ENCODE measurements at regions of chr16 and their contacts with region 1.

Region 1: DNA sequence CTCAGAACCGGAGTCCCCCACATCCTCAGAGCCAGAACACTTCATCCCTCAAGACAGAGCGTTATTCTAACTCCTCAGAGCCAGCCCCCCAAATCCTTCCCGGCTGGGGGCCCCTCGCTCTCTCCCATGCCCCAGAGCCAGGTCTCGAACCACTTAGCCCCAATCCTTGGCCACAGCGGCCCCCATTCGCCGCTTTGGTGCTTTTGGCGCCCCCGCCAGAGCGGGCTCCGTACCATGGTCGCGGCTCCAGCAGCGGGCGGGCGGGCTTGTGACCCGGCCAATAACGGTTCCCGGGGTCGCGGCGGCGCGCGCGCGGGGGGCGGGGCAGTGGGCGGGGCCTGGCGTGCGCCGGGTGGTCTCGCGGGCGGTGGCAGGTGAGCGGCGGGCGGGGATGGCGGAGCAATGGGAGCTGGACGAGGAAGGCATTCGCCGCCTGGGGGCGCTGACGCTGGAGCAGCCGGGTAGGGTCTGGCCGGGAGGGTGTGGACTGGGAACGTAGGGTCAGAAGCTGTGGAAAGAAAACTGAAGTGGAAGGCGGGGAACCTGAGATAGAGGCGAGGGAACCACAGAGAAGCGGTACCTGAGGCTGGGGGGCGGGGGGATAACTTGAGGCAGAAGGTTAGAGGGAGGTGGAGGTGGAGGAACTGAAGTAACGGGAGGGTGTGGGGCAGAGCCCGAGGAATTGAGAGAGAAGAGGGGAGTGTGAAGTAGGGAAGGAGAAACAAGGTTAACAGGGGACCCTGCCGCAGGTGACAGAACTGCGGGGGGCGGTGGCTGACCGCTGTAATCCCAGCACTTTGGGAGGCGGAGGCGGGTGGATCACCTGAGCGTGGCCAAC is at the starts of genes KCTD19 and LRRC36:
- DNase-seq: no peak
- H3K4me3 ChIP-seq: peak within 1 kb of the TSS; percentile 48
- H3K27me3 ChIP-seq: peaks cover 9% of the 10 kb centered on the region
- CTCF ChIP-seq: peak; percentile 57
- polyA plus RNA-seq, gene KCTD19: 0.06 TPM in 1 of 2 replicates, not detected in the other
- polyA plus RNA-seq, gene LRRC36: 0.06 TPM in 1 of 2 replicates, not detected in the other

Region 2: DNA sequence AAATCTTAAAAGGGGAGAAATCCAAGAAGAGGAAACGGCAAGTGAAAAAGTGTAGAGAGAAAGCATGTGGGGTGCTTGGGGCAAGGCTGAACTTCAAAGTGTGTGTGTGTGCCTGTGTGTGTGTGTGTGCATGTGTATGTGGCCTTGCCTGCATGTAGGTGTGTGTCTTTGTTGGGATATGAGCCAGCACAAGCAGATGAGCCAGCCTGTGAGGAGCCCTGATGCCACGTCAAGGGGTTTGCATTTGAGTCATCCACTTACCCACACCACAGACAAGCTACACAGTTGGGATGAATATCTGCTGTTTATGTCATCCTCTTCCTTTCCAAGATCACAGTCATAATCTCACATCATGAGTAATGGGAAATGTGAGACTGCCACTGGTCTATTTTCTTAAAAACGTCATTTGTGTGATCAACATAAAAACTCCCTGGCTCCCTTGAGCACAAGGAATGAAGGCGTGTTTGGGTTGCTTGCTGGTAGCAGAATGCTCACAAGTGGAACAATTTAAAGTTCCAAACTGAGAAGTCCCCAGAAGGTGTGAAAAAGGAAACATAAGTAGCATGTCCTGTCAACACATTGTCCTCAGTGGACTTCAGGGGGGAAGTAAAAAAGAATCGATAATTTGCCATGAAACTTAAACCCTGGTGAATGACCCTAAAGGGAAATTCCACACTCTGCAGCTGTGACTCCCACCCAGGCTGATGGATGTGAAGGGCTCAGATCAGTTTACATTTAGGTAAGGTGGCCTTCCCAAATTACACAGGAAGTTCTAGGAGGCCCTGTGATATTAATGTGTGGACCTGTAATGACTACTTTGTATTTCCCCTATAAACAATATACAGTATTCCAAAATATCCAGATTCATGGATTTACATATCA is 14.8 kb before region 1 on chr16:
- CTCF ChIA-PET with region 1: interaction called, 10 read pairs
- POLR2A ChIA-PET with region 1: interaction called, 3 read pairs
- DNase-seq: peak; percentile 100
- H3K4me3 ChIP-seq: no peak overlapping the region
- H3K27me3 ChIP-seq: no peaks in the 10 kb centered on the region
- CTCF ChIP-seq: no peak

Region 3: GRCh38 chr16:67346341-67346740 is 19.6 kb after region 1 on chr16:
- CTCF ChIA-PET with region 1: interaction called, 12 read pairs
- POLR2A ChIA-PET with region 1: no interaction called
- DNase-seq: no peak
- H3K4me3 ChIP-seq: no peak overlapping the region
- H3K27me3 ChIP-seq: 0 out of 2 replicates have a peak, but pooled peaks cover 1% of the 10 kb centered on the region
- CTCF ChIP-seq: no peak

Region 4: GRCh38 chr16:67546761-67547422 is 220.2 kb after region 1 on chr16:
- CTCF ChIA-PET with region 1: no interaction called
- POLR2A ChIA-PET with region 1: no interaction called
- DNase-seq: no peak
- H3K4me3 ChIP-seq: no peak overlapping the region
- H3K27me3 ChIP-seq: no peaks in the 10 kb centered on the region
- CTCF ChIP-seq: peak; percentile 95

Measured in BJ (cell line).